Left ventricle myocardium superior (tissue), 1 donor: ENCODE measurements at regions of chr1 and their contacts with region 1.

Region 1: GRCh38 chr1:233440951-233441401 is 113.5 kb downstream of the MAP3K21 start:
- DNase-seq: no peak
- ATAC-seq: peak; percentile 43

Region 2: GRCh38 chr1:233566886-233567285 is 125.9 kb after region 1 on chr1:
- intact Hi-C with region 1: no loop called
- DNase-seq: no peak
- ATAC-seq: no peak

Region 3: DNA sequence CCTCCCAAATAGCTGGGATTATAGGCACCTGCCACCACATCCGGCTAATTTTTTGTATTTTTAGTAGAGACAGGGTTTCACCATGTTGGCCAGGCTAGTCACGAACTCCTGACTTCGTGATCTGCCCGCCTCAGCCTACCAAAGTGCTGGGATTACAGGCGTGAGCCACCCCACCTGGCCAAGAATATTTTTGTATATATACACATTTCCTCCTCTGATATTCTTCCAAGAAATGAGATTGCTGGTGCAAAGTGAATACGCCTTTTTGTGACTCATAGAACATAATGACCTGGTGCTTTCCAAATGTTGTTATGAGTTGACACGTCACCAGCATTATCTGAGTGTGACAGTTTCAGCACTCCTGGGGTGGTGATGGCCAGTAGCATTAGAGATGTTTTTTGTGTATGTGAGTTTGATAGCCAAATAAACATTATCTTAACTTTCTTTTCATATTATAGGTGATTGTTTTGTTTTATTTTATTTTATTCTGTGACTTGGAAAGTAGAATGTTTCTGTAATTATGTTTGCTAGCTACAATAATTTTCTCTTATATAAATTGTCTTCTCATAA is 227.8 kb after region 1 on chr1:
- intact Hi-C with region 1: no loop called
- DNase-seq: peak; percentile 33
- ATAC-seq: peak; percentile 76

Region 4: DNA sequence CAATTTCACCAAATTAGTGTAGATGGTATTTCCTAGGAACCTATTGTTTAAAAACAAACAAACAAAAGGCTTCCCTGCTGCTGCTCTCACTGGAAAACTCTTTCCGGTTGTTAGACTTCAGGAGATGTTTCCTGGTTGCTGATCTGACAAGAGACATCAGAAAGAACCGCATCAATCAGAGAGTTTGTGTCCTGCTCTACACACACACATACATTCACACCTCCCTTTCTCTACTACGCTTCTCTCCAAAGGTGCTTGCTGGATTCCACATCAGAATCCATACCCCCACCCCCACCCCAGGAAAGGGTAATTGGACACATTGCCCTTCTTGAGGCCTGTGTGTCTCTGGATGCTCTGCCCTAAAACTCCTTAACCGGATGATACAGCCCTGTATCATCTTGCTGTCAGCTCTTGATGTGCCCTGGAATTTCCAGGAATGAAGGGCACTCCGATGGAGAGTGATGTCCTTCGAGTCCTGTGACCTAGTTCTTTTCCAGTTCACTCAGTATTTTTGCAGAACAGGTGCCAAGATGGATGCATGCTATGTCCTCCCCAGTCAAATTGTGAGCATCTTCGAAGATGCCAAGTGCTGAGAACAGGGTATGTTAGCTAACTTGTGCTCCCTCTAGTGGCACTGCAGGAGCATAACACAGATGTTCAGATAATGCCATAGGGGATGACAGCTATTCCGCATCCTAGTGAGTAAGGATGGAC is 349.8 kb after region 1 on chr1:
- intact Hi-C with region 1: loop called (anchors 2 kb)
- DNase-seq: no peak
- ATAC-seq: peak; percentile 88

Region 5: DNA sequence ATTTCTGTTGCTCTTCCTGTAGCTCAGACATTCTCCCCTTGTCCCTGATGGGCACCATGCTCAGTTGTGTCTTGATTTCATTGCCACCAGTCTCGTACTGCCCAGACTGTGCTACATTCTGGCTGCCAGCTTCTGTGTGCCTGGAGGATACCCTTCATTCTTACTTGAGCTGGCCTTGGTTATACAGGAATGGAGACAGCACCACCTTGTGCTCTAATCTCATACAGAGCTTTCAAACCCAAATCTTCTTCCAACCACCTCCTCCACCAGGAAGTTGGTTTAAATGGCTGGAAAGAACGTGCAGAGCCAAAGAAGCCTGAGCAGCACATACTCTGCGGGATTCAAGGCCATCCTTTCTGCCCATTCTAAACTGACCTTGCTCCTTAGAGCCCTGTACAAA is 628.8 kb after region 1 on chr1:
- intact Hi-C with region 1: loop called (anchors 10 kb)
- DNase-seq: no peak
- ATAC-seq: no peak